ENCODE measurements at regions of chr16 and their contacts with region 1.

Region 1: GRCh38 chr16:30775392-30776188 is 11.4 kb downstream of the ZNF629 start:
- DNase-seq: peak; percentile 80
- ATAC-seq: peak; percentile 85
- H3K4me3 Mint-ChIP-seq: peak overlapping the region; percentile 83
- H3K27ac Mint-ChIP-seq: peak overlapping the region; percentile 93
- H3K4me1 Mint-ChIP-seq: peaks cover 15% of the 10 kb centered on the region
- H3K27me3 Mint-ChIP-seq: no peaks in the 10 kb centered on the region

Region 2: GRCh38 chr16:30472328-30472942 is 303.2 kb before region 1 on chr16 and contains the start of gene ITGAL:
- CTCF ChIA-PET with region 1: no interaction called
- POLR2A ChIA-PET with region 1: no interaction called
- intact Hi-C with region 1: no loop called
- DNase-seq: peak; percentile 93
- ATAC-seq: peak; percentile 62
- H3K4me3 Mint-ChIP-seq: peak within 1 kb of the TSS; percentile 95
- H3K27ac Mint-ChIP-seq: peak within 1 kb of the TSS; percentile 99
- H3K4me1 Mint-ChIP-seq: peaks cover 63% of the 10 kb centered on the region
- H3K27me3 Mint-ChIP-seq: no peaks in the 10 kb centered on the region
- total RNA-seq, gene ITGAL: 210 to 222 TPM

Region 3: GRCh38 chr16:30571695-30572600 is 203.6 kb before region 1 on chr16 and contains the start of gene ZNF688:
- CTCF ChIA-PET with region 1: no interaction called
- POLR2A ChIA-PET with region 1: no interaction called
- intact Hi-C with region 1: no loop called
- DNase-seq: peak; percentile 95
- ATAC-seq: peak; percentile 79
- H3K4me3 Mint-ChIP-seq: peak within 1 kb of the TSS; percentile 87
- H3K27ac Mint-ChIP-seq: peak within 1 kb of the TSS; percentile 93
- H3K4me1 Mint-ChIP-seq: peaks cover 57% of the 10 kb centered on the region
- H3K27me3 Mint-ChIP-seq: no peaks in the 10 kb centered on the region
- total RNA-seq, gene ZNF688: 7.1 to 9.1 TPM

Region 4: DNA sequence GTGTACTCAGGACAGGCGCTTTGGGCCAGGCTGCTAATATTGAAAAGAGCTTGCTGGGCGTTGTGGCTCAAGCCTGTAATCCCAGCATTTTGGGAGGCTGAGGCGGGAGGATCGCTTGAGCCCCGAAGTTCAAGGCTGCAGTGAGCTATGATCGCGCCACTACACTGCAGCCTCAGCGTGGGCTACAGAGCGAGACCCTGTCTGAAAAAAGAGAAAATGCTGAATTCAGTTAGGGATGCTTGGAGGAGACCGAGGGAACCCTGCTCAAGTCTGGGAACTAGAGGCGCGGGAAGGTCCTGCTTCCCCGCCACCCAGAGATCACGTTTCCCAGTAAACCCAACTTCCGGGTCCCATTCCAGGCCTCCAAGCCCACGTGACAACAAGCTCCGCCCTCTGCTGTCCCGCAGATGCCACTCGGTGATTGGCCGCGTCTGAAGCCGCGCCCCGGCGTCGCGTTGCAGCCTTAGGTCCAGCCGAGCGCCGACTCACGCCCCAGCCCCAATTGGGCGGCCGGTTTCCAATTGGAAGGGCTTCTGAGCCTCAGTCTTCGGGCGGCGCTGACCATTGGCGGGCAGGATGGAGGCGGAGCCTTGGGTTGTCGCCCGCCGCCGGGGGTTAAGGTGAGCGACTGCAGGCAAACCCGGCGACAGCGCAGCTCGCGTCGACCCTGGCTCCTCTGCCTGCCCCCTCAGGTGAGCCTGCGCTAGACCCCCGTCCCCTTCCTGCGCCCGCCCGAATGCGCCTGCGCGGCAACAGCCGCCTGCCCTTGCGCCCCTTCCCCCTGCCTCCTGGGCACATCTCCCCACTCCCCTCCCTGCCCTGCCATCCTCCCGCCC is 27.6 kb before region 1 on chr16 and contains the start of gene PHKG2:
- CTCF ChIA-PET with region 1: interaction called, 3 read pairs
- POLR2A ChIA-PET with region 1: interaction called, 3 read pairs
- intact Hi-C with region 1: loop called in 1 of 2 experiments (anchors 2 kb)
- DNase-seq: peak; percentile 99
- ATAC-seq: peak; percentile 99
- H3K4me3 Mint-ChIP-seq: peak within 1 kb of the TSS; percentile 88
- H3K27ac Mint-ChIP-seq: peak within 1 kb of the TSS; percentile 88
- H3K4me1 Mint-ChIP-seq: peaks cover 21% of the 10 kb centered on the region
- H3K27me3 Mint-ChIP-seq: no peaks in the 10 kb centered on the region
- total RNA-seq, gene PHKG2: 21.8 to 26.0 TPM

Region 5: DNA sequence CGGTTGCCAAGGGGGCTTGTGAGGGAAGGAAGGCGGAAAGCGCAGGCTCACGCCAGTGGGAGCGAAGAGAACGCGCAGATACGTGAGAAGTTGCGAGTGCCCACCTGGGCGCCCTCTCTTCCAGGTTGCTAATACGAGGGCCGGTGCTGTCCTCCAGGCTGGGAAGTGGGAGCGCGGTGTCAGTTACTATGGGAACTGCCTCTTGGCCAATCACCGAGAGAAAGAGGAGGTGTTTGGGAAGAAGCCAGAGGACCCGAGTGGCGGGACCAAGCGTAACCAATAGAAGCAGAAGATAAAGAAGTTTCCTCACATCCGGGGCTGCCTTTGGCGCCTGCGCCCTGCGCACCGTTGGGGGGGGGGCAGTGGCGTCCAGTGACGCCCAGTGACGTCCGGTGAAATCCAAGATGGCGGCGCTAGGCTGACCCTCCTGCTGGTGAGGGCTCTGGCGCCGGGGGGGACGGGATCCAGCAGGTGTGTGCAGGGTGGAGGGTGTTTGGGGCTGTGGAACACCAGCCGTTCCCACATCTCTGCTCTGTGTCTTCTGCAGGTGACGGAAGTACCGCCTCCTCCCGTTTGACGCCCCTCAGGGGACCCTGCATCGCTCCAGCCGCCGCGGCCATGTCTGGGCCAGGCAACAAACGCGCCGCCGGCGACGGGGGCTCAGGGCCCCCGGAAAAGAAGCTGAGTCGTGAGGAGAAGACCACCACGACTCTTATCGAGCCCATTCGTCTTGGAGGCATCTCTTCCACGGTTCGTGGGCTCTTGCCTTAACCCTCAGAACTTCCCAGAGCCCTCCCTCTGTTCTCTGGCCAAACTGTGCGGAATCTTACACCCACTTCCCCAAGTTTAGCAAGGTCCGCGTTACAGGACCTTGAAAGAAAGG is 13.4 kb before region 1 on chr16 and contains the starts of genes CFAP119 and RNF40:
- CTCF ChIA-PET with region 1: interaction called, 8 read pairs
- POLR2A ChIA-PET with region 1: no interaction called
- intact Hi-C with region 1: loop called in 1 of 2 experiments (anchors 1 kb)
- DNase-seq: peak; percentile 94
- ATAC-seq: peak; percentile 98
- H3K4me3 Mint-ChIP-seq: peak within 1 kb of the TSS; percentile 90
- H3K27ac Mint-ChIP-seq: peak within 1 kb of the TSS; percentile 83
- H3K4me1 Mint-ChIP-seq: peaks cover 25% of the 10 kb centered on the region
- H3K27me3 Mint-ChIP-seq: no peaks in the 10 kb centered on the region
- total RNA-seq, gene CFAP119: 1.7 to 3.1 TPM
- total RNA-seq, gene RNF40: 72.3 to 85.5 TPM

Measured in activated CD4-positive, alpha-beta T cell treated with anti-CD3 and anti-CD28 coated beads for 36 hours (primary cell).